ENCODE measurements at regions of chr1 and their contacts with region 1.

Region 1: DNA sequence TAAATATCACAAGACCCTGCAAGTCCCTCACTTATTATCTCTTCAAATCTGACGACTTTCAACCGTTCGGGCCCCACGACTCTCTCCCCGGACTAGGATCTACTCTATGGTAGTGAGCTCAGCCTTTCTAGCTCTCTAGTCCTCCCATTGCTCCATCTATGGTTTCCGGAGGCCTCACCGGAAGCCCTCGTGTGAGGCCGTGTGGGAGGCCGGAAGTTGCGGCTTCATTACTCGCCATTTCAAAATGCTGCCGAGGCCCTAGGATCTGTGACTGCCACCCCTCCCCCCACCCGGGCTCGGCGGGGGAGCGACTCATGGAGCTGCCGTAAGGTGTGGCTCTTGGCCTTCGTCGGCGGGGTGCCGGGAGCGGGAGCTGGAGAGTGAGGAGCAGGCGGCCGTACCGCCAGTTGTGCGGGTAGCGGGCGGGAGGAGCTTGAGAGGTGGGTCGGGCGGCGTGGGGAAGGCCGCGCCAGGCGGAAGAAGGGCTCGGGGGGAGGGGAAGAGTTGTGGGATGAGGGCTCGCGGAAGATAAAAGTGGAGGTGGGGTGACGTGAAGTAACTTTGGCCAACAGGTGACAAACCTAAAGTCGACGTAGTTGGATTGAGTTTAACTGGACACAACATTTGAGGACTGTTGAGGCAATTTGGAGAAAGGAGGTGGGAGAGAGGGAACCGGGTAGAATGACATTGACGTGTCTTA is at the start of gene MDM4:
- DNase-seq: peak; percentile 83 to 98 (median 89)
- ATAC-seq: peak; percentile 72
- H3K4me3 ChIP-seq: peak within 1 kb of the TSS; percentile 91
- H3K4me3 Mint-ChIP-seq: no peak within 1 kb of the TSS
- H3K27ac ChIP-seq: peak within 1 kb of the TSS; percentile 98 to 99
- H3K27ac Mint-ChIP-seq: no peak within 1 kb of the TSS
- H3K4me1 ChIP-seq: peaks cover 88% of the 10 kb centered on the region
- H3K4me1 Mint-ChIP-seq: peaks cover 58% of the 10 kb centered on the region
- H3K27me3 ChIP-seq: no peaks in the 10 kb centered on the region
- H3K27me3 Mint-ChIP-seq: no peaks in the 10 kb centered on the region
- CTCF ChIP-seq: no peak
- total RNA-seq, gene MDM4: 260 to 266 TPM

Region 2: DNA sequence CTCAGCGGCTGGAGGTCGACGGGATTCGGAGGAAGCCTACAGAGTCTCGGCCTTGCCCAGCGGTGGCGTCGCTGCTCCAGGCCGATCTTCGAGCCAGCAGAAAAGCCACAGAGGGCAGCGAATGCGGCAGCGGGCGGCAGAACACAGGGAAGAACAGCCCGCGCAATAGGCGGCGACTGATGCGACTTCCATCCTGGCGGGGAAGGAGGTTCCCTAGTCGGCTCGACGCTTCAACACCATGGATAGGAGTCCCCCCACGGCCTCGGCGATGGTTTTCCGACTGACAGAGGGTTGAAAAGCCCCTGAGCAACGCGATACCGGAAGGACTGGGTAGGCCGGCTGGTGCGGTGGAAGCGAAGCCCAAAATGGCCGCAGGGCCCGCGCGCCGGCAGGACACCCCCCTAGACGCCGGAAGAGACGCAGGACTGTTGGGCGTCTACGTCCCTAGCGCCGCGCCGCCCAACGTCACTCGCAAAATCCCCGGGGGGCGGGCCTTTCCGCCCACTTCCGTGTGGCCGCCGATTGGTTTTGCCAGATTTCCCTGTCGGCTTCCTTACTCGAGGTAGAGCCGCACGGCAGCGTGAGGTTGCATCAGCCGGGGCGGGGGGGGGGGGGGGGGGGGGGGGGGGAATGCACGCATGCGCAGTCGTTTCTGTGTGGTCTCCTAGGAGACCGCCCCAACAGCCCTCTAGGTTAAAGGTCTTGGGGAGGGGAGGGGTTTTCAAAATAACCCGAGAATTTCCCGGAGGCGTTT is 104.7 kb before region 1 on chr1 and contains the start of gene PPP1R15B:
- CTCF ChIA-PET with region 1: no interaction called
- POLR2A ChIA-PET with region 1: interaction called, 17 read pairs
- intact Hi-C with region 1: no loop called
- DNase-seq: peak; percentile 95 to 99 (median 97)
- ATAC-seq: peak; percentile 89
- H3K4me3 ChIP-seq: peak within 1 kb of the TSS; percentile 98
- H3K4me3 Mint-ChIP-seq: peak within 1 kb of the TSS; percentile 100
- H3K27ac ChIP-seq: peak within 1 kb of the TSS; percentile 100
- H3K27ac Mint-ChIP-seq: peak within 1 kb of the TSS; percentile 100
- H3K4me1 ChIP-seq: peaks cover 11% of the 10 kb centered on the region
- H3K4me1 Mint-ChIP-seq: peaks cover 25% of the 10 kb centered on the region
- H3K27me3 ChIP-seq: no peaks in the 10 kb centered on the region
- H3K27me3 Mint-ChIP-seq: no peaks in the 10 kb centered on the region
- CTCF ChIP-seq: no peak
- total RNA-seq, gene PPP1R15B: 171 to 179 TPM

Region 3: GRCh38 chr1:204494281-204495077 is 21.9 kb before region 1 on chr1 and contains the start of gene PIK3C2B:
- CTCF ChIA-PET with region 1: interaction called, 3 read pairs
- POLR2A ChIA-PET with region 1: interaction called, 63 read pairs
- intact Hi-C with region 1: no loop called
- DNase-seq: peak; percentile 46 to 86 (median 59)
- ATAC-seq: peak; percentile 71
- H3K4me3 ChIP-seq: peak within 1 kb of the TSS; percentile 70
- H3K4me3 Mint-ChIP-seq: peak within 1 kb of the TSS; percentile 91
- H3K27ac ChIP-seq: peak within 1 kb of the TSS; percentile 61 to 95
- H3K27ac Mint-ChIP-seq: peak within 1 kb of the TSS; percentile 88
- H3K4me1 ChIP-seq: peaks cover 57% of the 10 kb centered on the region
- H3K4me1 Mint-ChIP-seq: peaks cover 65% of the 10 kb centered on the region
- H3K27me3 ChIP-seq: no peaks in the 10 kb centered on the region
- H3K27me3 Mint-ChIP-seq: no peaks in the 10 kb centered on the region
- CTCF ChIP-seq: peak; percentile 30
- total RNA-seq, gene PIK3C2B: 25.5 to 27.1 TPM

Region 4: GRCh38 chr1:204529371-204529895 is 13.1 kb after region 1 on chr1:
- CTCF ChIA-PET with region 1: interaction called, 4 read pairs
- POLR2A ChIA-PET with region 1: interaction called, 41 read pairs
- intact Hi-C with region 1: no loop called
- DNase-seq: no peak
- ATAC-seq: no peak
- H3K4me3 ChIP-seq: no peak overlapping the region
- H3K4me3 Mint-ChIP-seq: no peak overlapping the region
- H3K27ac ChIP-seq: no peak overlapping the region
- H3K27ac Mint-ChIP-seq: peak overlapping the region; percentile 17
- H3K4me1 ChIP-seq: peaks cover 16% of the 10 kb centered on the region
- H3K4me1 Mint-ChIP-seq: peaks cover 47% of the 10 kb centered on the region
- H3K27me3 ChIP-seq: no peaks in the 10 kb centered on the region
- H3K27me3 Mint-ChIP-seq: no peaks in the 10 kb centered on the region
- CTCF ChIP-seq: no peak

Region 5: DNA sequence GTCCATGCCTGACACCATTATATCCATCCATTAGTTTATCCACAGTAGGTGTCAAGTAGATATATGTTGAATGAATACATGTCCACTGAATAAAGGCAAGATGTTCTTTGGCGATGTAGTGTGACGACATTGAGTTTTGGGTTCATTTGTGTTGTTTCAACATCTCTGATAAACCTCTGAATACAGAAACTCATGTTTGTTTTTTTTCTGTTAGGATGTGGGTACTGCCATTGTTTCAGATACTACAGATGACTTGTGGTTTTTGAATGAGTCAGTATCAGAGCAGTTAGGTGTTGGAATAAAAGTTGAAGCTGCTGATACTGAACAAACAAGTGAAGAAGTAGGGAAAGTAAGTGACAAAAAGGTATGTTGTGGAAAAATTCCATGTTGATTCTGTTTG is 28.0 kb after region 1 on chr1:
- CTCF ChIA-PET with region 1: interaction called, 8 read pairs
- POLR2A ChIA-PET with region 1: interaction called, 83 read pairs
- intact Hi-C with region 1: loop called (anchors 2 kb)
- DNase-seq: peak in 3 of 14 experiments; percentile 70 to 84 (median 75)
- ATAC-seq: peak; percentile 94
- H3K4me3 ChIP-seq: no peak overlapping the region
- H3K4me3 Mint-ChIP-seq: peak overlapping the region; percentile 49
- H3K27ac ChIP-seq: peak overlapping the region; percentile 41 to 65
- H3K27ac Mint-ChIP-seq: peak overlapping the region; percentile 84
- H3K4me1 ChIP-seq: peaks cover 28% of the 10 kb centered on the region
- H3K4me1 Mint-ChIP-seq: peaks cover 63% of the 10 kb centered on the region
- H3K27me3 ChIP-seq: no peaks in the 10 kb centered on the region
- H3K27me3 Mint-ChIP-seq: no peaks in the 10 kb centered on the region
- CTCF ChIP-seq: no peak

Region 6: GRCh38 chr1:204556458-204557052 is 40.2 kb after region 1 on chr1:
- CTCF ChIA-PET with region 1: no interaction called
- POLR2A ChIA-PET with region 1: interaction called, 15 read pairs
- intact Hi-C with region 1: loop called in 1 of 2 experiments (anchors 5 kb)
- DNase-seq: no peak
- ATAC-seq: peak; percentile 67
- H3K4me3 ChIP-seq: no peak overlapping the region
- H3K4me3 Mint-ChIP-seq: peak overlapping the region; percentile 49
- H3K27ac ChIP-seq: peak overlapping the region in 1 of 2 donors; percentile 11
- H3K27ac Mint-ChIP-seq: peak overlapping the region; percentile 84
- H3K4me1 ChIP-seq: peaks cover 14% of the 10 kb centered on the region
- H3K4me1 Mint-ChIP-seq: peaks cover 58% of the 10 kb centered on the region
- H3K27me3 ChIP-seq: no peaks in the 10 kb centered on the region
- H3K27me3 Mint-ChIP-seq: no peaks in the 10 kb centered on the region
- CTCF ChIP-seq: no peak

Region 7: GRCh38 chr1:204565617-204566582 is 49.6 kb after region 1 on chr1:
- CTCF ChIA-PET with region 1: interaction called, 6 read pairs
- POLR2A ChIA-PET with region 1: interaction called, 15 read pairs
- intact Hi-C with region 1: loop called in 1 of 2 experiments (anchors 5 kb)
- DNase-seq: peak; percentile 24 to 85 (median 43)
- ATAC-seq: peak; percentile 87
- H3K4me3 ChIP-seq: no peak overlapping the region
- H3K4me3 Mint-ChIP-seq: no peak overlapping the region
- H3K27ac ChIP-seq: no peak overlapping the region
- H3K27ac Mint-ChIP-seq: peak overlapping the region; percentile 80
- H3K4me1 ChIP-seq: peaks cover 37% of the 10 kb centered on the region
- H3K4me1 Mint-ChIP-seq: peaks cover 54% of the 10 kb centered on the region
- H3K27me3 ChIP-seq: no peaks in the 10 kb centered on the region
- H3K27me3 Mint-ChIP-seq: no peaks in the 10 kb centered on the region
- CTCF ChIP-seq: peak; percentile 66

Region 8: DNA sequence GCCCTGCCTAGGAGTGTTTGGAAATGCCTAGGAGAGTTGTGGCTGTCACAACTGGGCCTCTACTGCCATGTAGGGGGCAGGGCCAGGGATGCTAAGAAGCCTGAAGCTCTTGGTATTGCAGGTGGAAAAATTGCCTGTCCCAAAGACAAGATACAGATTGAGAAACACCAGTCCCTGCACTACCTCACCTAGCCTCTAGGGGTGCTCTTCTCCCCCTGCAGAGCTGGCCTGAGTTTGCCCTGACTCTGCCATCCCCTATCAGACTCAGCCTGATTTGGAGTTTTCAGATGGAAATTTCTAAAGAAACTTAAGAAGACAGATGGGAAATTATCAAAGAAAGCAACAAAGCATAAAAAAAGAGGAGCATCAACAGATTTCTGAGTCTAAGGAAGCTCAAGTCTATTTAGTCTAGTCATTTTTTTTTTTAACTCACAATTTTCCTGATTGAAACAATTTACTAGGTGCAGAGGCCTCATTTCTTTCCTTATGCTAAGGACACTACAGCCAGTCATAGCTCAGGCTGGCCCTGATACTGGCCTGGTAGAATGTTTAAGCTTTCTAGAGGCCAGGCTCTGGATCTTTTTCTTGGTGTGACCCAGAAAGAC is 230.6 kb after region 1 on chr1:
- CTCF ChIA-PET with region 1: no interaction called
- POLR2A ChIA-PET with region 1: no interaction called
- intact Hi-C with region 1: no loop called
- DNase-seq: peak; percentile 21 to 74 (median 36)
- ATAC-seq: peak; percentile 74
- H3K4me3 ChIP-seq: no peak overlapping the region
- H3K4me3 Mint-ChIP-seq: no peak overlapping the region
- H3K27ac ChIP-seq: no peak overlapping the region
- H3K27ac Mint-ChIP-seq: no peak overlapping the region
- H3K4me1 ChIP-seq: no peaks in the 10 kb centered on the region
- H3K4me1 Mint-ChIP-seq: no peaks in the 10 kb centered on the region
- H3K27me3 ChIP-seq: peaks cover 0 to 9% of the 10 kb centered on the region in 2 experiments
- H3K27me3 Mint-ChIP-seq: peaks cover 18% of the 10 kb centered on the region
- CTCF ChIP-seq: peak; percentile 91

Measured in CD4-positive, alpha-beta T cell (primary cell).